ENCODE measurements at regions of chr10 and their contacts with region 1.

Region 1: GRCh38 chr10:101214446-101215396 is 14.5 kb downstream of the LBX1 start:
- DNase-seq: peak; percentile 81
- H3K4me3 ChIP-seq: no peak overlapping the region
- H3K27ac ChIP-seq: no peak overlapping the region
- H3K4me1 ChIP-seq: peaks cover 6% of the 10 kb centered on the region
- CTCF ChIP-seq: peak; percentile 88

Region 2: GRCh38 chr10:100934084-100934659 is 280.5 kb before region 1 on chr10:
- CTCF ChIA-PET with region 1: no interaction called
- POLR2A ChIA-PET with region 1: no interaction called
- intact Hi-C with region 1: no loop called
- DNase-seq: peak; percentile 21
- H3K4me3 ChIP-seq: no peak overlapping the region
- H3K27ac ChIP-seq: no peak overlapping the region
- H3K4me1 ChIP-seq: no peaks in the 10 kb centered on the region
- CTCF ChIP-seq: peak; percentile 79

Region 3: DNA sequence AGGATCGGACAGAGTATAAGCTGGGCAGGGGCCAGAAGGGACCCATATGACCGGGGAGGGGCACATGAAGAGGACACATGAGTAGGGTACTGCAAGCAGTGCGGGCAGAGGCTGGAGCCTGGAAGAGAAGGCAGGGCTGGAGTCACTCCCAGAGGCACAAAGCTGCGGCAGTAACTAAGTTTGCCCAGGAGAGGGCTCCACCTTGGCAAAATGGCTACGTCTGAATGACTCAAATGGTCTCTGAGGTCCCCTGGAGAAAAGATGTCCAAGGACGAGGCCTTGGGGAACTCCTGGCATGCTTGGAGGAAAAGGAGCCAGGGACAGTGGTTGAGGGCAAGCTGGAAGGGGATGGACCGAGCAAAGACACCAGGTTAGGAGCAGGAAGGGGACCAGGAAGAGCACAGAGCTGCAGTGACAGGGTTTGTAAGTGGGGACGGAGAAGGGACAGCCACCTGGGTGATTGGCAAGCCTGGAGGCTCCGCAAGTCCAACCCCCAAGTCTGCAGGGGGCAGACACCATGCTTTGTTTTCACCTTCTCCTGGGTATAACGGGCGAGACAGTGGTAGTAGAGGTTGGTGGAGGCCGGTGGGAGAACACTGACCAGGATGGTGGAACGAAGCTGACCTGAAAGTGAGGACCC is 57.6 kb after region 1 on chr10:
- CTCF ChIA-PET with region 1: no interaction called
- POLR2A ChIA-PET with region 1: no interaction called
- intact Hi-C with region 1: loop called (anchors 2 kb)
- DNase-seq: peak; percentile 60
- H3K4me3 ChIP-seq: no peak overlapping the region
- H3K27ac ChIP-seq: no peak overlapping the region
- H3K4me1 ChIP-seq: no peaks in the 10 kb centered on the region
- CTCF ChIP-seq: peak; percentile 85

Region 4: GRCh38 chr10:101441541-101442455 is 227.1 kb after region 1 on chr10:
- CTCF ChIA-PET with region 1: interaction called, 6 read pairs
- POLR2A ChIA-PET with region 1: interaction called, 4 read pairs
- intact Hi-C with region 1: loop called (anchors 1 kb)
- DNase-seq: peak; percentile 68
- H3K4me3 ChIP-seq: no peak overlapping the region
- H3K27ac ChIP-seq: no peak overlapping the region
- H3K4me1 ChIP-seq: no peaks in the 10 kb centered on the region
- CTCF ChIP-seq: peak; percentile 86

Region 5: GRCh38 chr10:101552442-101552841 is 337.7 kb after region 1 on chr10:
- CTCF ChIA-PET with region 1: no interaction called
- POLR2A ChIA-PET with region 1: no interaction called
- intact Hi-C with region 1: loop called (anchors 5 kb)
- DNase-seq: no peak
- H3K4me3 ChIP-seq: no peak overlapping the region
- H3K27ac ChIP-seq: no peak overlapping the region
- H3K4me1 ChIP-seq: no peaks in the 10 kb centered on the region
- CTCF ChIP-seq: no peak

Region 6: DNA sequence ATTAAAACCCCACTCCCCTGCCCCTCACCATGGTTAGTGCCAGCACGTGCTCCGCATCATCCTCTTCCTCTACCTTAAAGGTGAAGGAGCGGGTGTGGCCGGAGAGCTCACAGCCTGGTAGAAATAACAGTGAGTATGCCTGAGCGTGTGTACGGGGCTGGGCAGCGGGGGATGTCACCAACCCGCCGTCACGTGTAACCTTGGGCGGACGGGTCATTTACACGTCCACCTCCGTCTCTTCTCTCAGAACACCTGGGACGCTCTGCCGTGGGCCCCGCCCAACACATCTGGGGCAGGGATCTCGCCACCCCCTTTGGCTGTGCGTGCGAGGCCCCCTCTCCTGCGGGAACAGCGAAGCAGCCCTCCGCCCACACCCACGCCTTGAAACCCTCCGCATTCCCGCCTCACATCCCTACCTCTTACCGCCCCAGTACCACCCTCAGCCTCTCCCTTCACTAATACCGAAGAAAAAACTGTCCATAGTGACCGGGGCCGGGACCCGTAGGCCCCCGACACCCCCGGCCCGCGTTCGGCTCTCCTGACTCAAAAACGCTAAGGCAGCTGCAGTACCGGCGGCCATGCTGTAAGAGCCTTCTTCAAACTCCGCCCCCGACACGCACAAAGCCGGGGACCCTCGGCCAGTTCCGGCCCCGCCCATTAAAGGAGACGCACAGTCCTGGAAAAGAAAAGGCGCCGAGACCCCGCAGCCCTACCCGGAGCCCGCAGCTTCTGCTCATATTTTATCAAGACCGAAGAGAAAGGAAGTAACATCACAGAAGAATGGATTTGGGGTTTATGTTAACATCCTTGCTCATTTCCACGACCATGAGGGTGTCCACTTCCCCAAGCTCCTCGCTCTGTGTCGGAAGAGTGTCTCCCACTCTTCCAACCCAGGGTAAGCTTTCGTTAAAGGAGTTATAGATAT is 568.4 kb after region 1 on chr10 and contains the start of gene NPM3:
- CTCF ChIA-PET with region 1: no interaction called
- POLR2A ChIA-PET with region 1: interaction called, 7 read pairs
- intact Hi-C with region 1: loop called (anchors 10 kb)
- DNase-seq: peak; percentile 90
- H3K4me3 ChIP-seq: peak within 1 kb of the TSS; percentile 93
- H3K27ac ChIP-seq: peak within 1 kb of the TSS; percentile 40
- H3K4me1 ChIP-seq: peaks cover 48% of the 10 kb centered on the region
- CTCF ChIP-seq: no peak
- total RNA-seq, gene NPM3: 115 and 122 TPM in 2 replicates

Measured in OCI-LY7 (cell line).